HCT116 (cell line): ENCODE measurements at regions of chr15 and their contacts with region 1.

Region 1: DNA sequence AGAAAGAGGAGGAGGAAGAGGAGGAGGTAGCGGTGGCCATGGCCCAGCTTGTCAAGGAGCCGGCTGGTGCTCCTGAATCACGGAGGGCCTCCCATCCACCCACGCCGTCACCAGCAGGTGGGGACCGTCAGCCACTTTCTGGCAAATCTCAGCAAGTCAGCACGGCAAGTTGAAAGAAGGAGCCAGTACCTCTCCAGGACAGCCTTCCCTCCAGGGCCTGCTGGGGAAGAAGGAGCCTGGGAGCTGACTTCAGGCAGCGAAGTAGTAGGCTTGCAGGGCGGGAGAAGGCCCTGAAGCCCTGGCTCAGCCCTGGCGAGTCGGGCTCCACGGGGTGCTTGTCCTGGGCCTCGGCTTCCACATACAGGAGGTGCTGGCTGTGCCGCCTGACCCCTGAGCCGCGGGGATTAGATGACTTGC is 99.2 kb upstream of the TRPM1 start:
- DNase-seq: no peak
- ATAC-seq: peak; percentile 80
- H3K4me3 ChIP-seq: no peak overlapping the region
- H3K27ac ChIP-seq: no peak overlapping the region
- H3K4me1 ChIP-seq: no peaks in the 10 kb centered on the region
- H3K27me3 ChIP-seq: no peaks in the 10 kb centered on the region; the same call in 1 of the 2 replicates
- CTCF ChIP-seq: peak; percentile 32 to 45 (median 36); a peak in 4 of 6 replicates
- POLR2A ChIP-seq: no peak
- RAD21 ChIP-seq: peak; percentile 57

Region 2: GRCh38 chr15:30670056-30670455 is 530.7 kb before region 1 on chr15:
- CTCF ChIA-PET with region 1: no interaction called
- POLR2A ChIA-PET with region 1: no interaction called
- RAD21 ChIA-PET with region 1: no interaction called
- intact Hi-C with region 1: loop called (anchors 10 kb)
- DNase-seq: no peak
- ATAC-seq: no peak
- H3K4me3 ChIP-seq: no peak overlapping the region
- H3K27ac ChIP-seq: no peak overlapping the region
- H3K4me1 ChIP-seq: no peaks in the 10 kb centered on the region
- H3K27me3 ChIP-seq: no peaks in the 10 kb centered on the region
- CTCF ChIP-seq: no peak
- POLR2A ChIP-seq: no peak
- RAD21 ChIP-seq: no peak

Region 3: DNA sequence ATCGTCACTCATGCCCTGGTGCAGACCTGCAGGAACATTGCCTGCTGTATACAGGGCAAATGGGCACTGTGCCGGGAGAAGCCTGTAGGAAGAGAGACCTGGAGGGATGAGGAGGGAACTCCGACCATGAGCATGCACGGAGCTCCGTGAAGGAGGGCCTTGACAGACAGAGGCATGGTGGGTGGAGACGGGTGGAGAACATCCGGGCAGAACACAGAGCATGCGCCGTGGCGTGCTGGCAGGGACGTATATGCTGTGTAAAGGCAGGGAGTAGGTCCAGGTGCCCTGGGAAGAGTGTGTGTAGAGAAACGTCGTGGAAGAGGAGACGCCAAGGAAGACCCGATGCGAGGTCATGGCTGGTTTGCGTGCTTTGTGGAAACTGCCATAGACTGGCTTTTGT is 430.0 kb before region 1 on chr15:
- CTCF ChIA-PET with region 1: no interaction called
- POLR2A ChIA-PET with region 1: no interaction called
- RAD21 ChIA-PET with region 1: no interaction called
- intact Hi-C with region 1: no loop called
- DNase-seq: no peak
- ATAC-seq: no peak
- H3K4me3 ChIP-seq: no peak overlapping the region
- H3K27ac ChIP-seq: no peak overlapping the region
- H3K4me1 ChIP-seq: no peaks in the 10 kb centered on the region
- H3K27me3 ChIP-seq: no peaks in the 10 kb centered on the region
- CTCF ChIP-seq: no peak
- POLR2A ChIP-seq: no peak
- RAD21 ChIP-seq: no peak

Region 4: DNA sequence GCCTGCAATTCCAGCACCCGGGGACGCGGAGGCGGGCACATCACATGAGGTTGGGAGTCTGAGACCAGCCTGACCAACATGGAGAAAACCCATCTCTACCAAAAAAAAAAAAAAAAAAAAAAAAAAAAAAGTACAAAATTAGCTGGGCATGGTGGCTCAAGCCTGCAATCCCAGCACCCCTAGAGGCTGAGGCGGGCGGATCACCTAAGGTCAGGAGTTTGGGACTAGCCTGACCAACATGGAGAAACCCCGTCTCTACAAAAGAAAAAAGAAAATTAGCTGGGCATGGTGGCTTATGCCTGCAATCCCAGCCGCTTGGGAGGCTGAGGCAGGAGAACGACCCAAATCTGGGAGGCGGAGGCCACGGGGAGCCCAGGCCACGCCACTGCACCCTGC is 304.5 kb before region 1 on chr15:
- CTCF ChIA-PET with region 1: no interaction called
- POLR2A ChIA-PET with region 1: no interaction called
- RAD21 ChIA-PET with region 1: no interaction called
- intact Hi-C with region 1: loop called (anchors 10 kb)
- DNase-seq: no peak
- ATAC-seq: no peak
- H3K4me3 ChIP-seq: no peak overlapping the region
- H3K27ac ChIP-seq: no peak overlapping the region
- H3K4me1 ChIP-seq: peaks cover 5 to 8% of the 10 kb centered on the region in 2 experiments; a peak in 3 of 4 replicates
- H3K27me3 ChIP-seq: no peaks in the 10 kb centered on the region
- CTCF ChIP-seq: no peak
- POLR2A ChIP-seq: no peak
- RAD21 ChIP-seq: no peak

Region 5: GRCh38 chr15:31223478-31224350 is 23.0 kb after region 1 on chr15:
- CTCF ChIA-PET with region 1: no interaction called
- POLR2A ChIA-PET with region 1: no interaction called
- RAD21 ChIA-PET with region 1: no interaction called
- intact Hi-C with region 1: no loop called
- DNase-seq: no peak
- ATAC-seq: no peak
- H3K4me3 ChIP-seq: no peak overlapping the region
- H3K27ac ChIP-seq: no peak overlapping the region
- H3K4me1 ChIP-seq: peaks cover 0 to 5% of the 10 kb centered on the region in 2 experiments; a peak in 1 of 4 replicates
- H3K27me3 ChIP-seq: no peaks in the 10 kb centered on the region
- CTCF ChIP-seq: no peak
- POLR2A ChIP-seq: no peak
- RAD21 ChIP-seq: no peak

Region 6: GRCh38 chr15:31280046-31280830 is 79.5 kb after region 1 on chr15:
- CTCF ChIA-PET with region 1: no interaction called
- POLR2A ChIA-PET with region 1: no interaction called
- RAD21 ChIA-PET with region 1: no interaction called
- intact Hi-C with region 1: no loop called
- DNase-seq: no peak
- ATAC-seq: no peak
- H3K4me3 ChIP-seq: no peak overlapping the region
- H3K27ac ChIP-seq: no peak overlapping the region
- H3K4me1 ChIP-seq: no peaks in the 10 kb centered on the region
- H3K27me3 ChIP-seq: no peaks in the 10 kb centered on the region
- CTCF ChIP-seq: no peak
- POLR2A ChIP-seq: no peak
- RAD21 ChIP-seq: no peak